MCF 10A (cell line): ENCODE measurements at regions of chr2 and their contacts with region 1.

Region 1: DNA sequence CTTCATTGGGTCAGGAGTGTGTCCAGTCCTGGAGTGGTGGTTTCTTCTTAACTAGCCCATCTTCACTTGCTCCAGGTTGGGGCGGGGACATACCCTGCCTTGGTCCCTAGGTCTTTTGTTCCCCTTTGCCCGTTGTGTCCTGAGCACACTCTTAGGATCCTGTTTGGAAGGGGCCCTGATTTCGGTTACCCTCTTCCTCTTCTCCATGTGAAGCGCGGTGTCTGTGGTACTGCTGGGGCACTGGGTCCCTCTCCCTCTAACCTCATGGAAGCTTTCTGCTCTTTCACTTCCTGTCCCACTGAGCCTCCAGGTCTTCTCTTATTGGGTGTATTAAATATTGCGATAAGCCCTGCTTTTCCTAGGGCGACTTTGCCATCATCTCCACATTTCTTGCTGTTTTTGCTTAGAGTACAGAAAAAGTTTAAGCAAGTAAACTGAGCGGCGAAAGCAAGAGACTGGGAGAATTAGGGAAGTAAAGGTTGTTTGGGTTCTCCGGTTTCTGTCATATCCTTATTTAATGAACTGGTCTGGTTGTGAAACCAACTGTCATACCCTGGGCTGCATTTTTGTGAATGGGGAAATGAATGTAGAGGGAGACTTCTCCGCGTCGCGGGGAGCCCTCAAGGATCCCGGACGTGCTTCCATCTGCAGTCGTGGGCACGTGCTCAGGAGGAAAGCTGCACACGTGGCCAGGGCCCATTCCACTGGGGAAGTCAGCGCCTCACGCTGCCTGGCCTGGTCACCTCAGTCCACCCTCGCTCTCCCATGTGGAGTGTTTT is 73.8 kb upstream of the B3GNT7 start:
- DNase-seq: no peak
- H3K4me3 Mint-ChIP-seq: no peak overlapping the region
- H3K27ac Mint-ChIP-seq: no peak overlapping the region
- H3K4me1 Mint-ChIP-seq: no peaks in the 10 kb centered on the region
- H3K27me3 Mint-ChIP-seq: no peaks in the 10 kb centered on the region
- CTCF ChIP-seq: no peak

Region 2: DNA sequence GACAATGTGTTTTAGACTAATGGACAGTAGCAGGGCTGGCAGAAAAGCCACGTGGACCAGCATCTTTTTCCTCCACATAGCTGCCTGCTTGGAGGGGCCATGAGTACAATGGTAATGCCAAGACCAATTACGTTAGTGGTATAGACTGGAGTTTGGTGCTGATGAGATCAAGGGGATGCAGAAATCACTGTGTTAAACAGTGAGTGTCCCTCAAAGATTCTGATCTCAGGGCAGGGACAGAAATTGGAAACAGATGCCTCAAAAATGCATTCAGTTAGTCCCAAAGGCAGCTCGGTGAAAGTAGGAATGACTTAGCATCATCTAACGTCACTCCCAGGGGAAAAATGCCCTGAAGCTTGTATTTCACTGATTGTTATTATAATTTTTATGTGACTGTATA is 1325.4 kb before region 1 on chr2:
- CTCF ChIA-PET with region 1: interaction called, 10 read pairs
- POLR2A ChIA-PET with region 1: no interaction called
- intact Hi-C with region 1: no loop called
- DNase-seq: no peak
- H3K4me3 Mint-ChIP-seq: no peak overlapping the region
- H3K27ac Mint-ChIP-seq: no peak overlapping the region
- H3K4me1 Mint-ChIP-seq: no peaks in the 10 kb centered on the region
- H3K27me3 Mint-ChIP-seq: no peaks in the 10 kb centered on the region
- CTCF ChIP-seq: no peak